IMR-90 (cell line): ENCODE measurements at regions of chr1 and their contacts with region 1.

Region 1: DNA sequence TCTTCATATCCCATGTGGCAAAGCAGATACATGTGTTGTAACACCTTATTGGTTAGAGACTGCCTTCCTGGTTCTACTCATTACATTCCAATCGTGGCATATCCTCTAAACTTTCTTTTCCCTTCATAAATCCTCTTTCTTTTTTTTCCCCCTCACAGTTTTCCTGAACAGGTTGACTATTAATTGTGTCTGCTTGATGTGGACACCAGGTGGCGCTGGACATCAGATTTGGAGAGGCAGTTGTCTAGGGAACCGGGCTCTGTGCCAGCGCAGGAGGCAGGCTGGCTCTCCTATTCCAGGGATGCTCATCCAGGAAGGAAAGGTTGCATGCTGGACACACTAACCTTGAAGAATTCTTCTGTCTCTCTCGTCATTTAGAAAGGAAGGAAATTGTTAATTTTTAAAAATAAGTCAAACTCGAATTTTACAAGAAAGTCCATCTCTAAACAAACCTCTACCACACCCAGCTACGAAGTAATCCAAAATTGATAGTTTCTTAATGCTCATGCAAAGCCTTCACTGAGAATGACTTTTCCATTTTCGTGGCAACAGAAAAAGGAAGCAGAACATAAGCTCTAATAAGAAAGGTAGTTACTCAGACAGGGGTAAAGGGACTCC is 59.4 kb upstream of the ASB17 start:
- DNase-seq: peak; percentile 83
- ATAC-seq: peak; percentile 73
- H3K4me3 ChIP-seq: no peak overlapping the region
- H3K27ac ChIP-seq: no peak overlapping the region
- H3K4me1 ChIP-seq: no peaks in the 10 kb centered on the region
- H3K27me3 ChIP-seq: peaks cover 2% of the 10 kb centered on the region; the same call in 1 of the 2 replicates
- CTCF ChIP-seq: peak; percentile 83
- POLR2A ChIP-seq: no peak
- RAD21 ChIP-seq: peak; percentile 67

Region 2: GRCh38 chr1:75870951-75871350 is 120.7 kb before region 1 on chr1:
- CTCF ChIA-PET with region 1: no interaction called
- POLR2A ChIA-PET with region 1: no interaction called
- dilution Hi-C with region 1: no loop called
- in situ Hi-C with region 1: no loop called
- intact Hi-C with region 1: no loop called
- DNase-seq: no peak
- ATAC-seq: no peak
- H3K4me3 ChIP-seq: no peak overlapping the region
- H3K27ac ChIP-seq: no peak overlapping the region
- H3K4me1 ChIP-seq: no peaks in the 10 kb centered on the region
- H3K27me3 ChIP-seq: no peaks in the 10 kb centered on the region
- CTCF ChIP-seq: no peak
- POLR2A ChIP-seq: no peak
- RAD21 ChIP-seq: no peak

Region 3: DNA sequence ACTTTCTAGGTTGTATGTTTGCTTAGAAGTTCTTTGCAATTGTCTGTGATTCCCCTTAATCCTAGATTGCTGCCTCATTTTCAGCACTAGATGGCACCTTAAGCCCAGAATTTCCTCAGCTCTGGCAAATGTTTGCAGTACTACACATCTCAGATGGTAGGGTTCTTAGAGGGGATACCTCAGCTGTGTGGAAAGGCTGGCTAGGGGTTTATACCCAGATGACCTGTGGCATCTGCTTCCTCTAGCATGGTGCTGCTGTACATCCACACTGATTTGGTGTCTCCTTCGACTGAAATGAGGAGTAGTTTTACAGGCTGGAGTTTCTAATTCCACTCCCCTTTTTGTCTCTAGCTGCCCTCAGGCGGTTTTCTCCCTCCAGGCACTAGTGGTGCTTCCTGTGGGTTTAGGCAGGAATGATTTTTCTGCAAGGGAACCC is 82.9 kb before region 1 on chr1:
- CTCF ChIA-PET with region 1: no interaction called
- POLR2A ChIA-PET with region 1: no interaction called
- dilution Hi-C with region 1: no loop called
- in situ Hi-C with region 1: no loop called
- intact Hi-C with region 1: loop called (anchors 5 kb)
- DNase-seq: peak; percentile 50
- ATAC-seq: peak; percentile 91
- H3K4me3 ChIP-seq: no peak overlapping the region
- H3K27ac ChIP-seq: no peak overlapping the region
- H3K4me1 ChIP-seq: no peaks in the 10 kb centered on the region
- H3K27me3 ChIP-seq: no peaks in the 10 kb centered on the region
- CTCF ChIP-seq: peak; percentile 64
- POLR2A ChIP-seq: no peak
- RAD21 ChIP-seq: peak; percentile 68

Region 4: DNA sequence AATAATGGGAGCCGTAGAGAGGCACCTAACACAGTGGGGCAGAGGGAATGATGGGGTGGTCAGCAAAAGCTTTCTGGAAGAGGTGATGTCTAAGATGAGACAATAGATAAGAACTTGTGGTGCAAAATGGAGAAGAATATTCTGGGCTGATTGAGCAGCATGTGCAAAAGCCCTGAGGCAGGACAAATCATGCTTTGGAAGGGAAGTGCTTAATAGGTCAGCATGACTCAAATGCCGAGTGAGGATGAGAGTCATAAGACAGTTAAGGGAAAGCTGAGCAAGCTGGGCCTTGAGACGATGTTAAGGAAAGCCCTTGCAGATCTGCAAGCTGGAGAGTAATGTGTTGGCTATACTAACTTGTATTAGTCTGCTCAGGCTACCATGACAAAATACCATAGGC is 22.1 kb before region 1 on chr1:
- CTCF ChIA-PET with region 1: no interaction called
- POLR2A ChIA-PET with region 1: no interaction called
- dilution Hi-C with region 1: no loop called
- in situ Hi-C with region 1: no loop called
- intact Hi-C with region 1: no loop called
- DNase-seq: peak; percentile 48
- ATAC-seq: no peak; the same call in 1 of the 2 replicates
- H3K4me3 ChIP-seq: no peak overlapping the region
- H3K27ac ChIP-seq: no peak overlapping the region
- H3K4me1 ChIP-seq: no peaks in the 10 kb centered on the region
- H3K27me3 ChIP-seq: no peaks in the 10 kb centered on the region
- CTCF ChIP-seq: no peak
- POLR2A ChIP-seq: no peak
- RAD21 ChIP-seq: no peak

Region 5: DNA sequence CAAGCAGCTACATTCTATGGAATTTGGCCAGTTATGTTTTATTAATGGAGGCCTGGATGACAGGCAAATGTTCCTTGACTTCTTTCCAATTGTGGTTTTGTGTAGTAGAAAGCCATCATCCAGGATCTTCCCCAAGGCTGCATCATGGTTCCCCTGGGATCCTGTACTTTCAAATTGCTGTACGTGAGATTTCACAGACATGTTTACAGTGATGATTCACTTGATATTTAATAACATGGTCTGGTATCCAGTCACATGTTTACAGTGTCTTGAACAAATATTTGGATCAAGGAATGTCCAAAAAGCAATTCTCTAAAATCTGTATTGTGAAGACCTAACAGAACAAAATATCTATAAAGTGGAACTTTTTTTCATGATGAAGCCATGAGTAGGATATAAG is 14.6 kb after region 1 on chr1:
- CTCF ChIA-PET with region 1: no interaction called
- POLR2A ChIA-PET with region 1: no interaction called
- dilution Hi-C with region 1: no loop called
- in situ Hi-C with region 1: no loop called
- intact Hi-C with region 1: no loop called
- DNase-seq: peak; percentile 83
- ATAC-seq: peak; percentile 92
- H3K4me3 ChIP-seq: no peak overlapping the region
- H3K27ac ChIP-seq: no peak overlapping the region
- H3K4me1 ChIP-seq: peaks cover 11% of the 10 kb centered on the region
- H3K27me3 ChIP-seq: no peaks in the 10 kb centered on the region
- CTCF ChIP-seq: no peak
- POLR2A ChIP-seq: no peak
- RAD21 ChIP-seq: no peak

Region 6: GRCh38 chr1:76074321-76075187 is 82.9 kb after region 1 on chr1 and contains the start of gene ST6GALNAC3:
- CTCF ChIA-PET with region 1: no interaction called
- POLR2A ChIA-PET with region 1: no interaction called
- dilution Hi-C with region 1: no loop called
- in situ Hi-C with region 1: no loop called
- intact Hi-C with region 1: loop called (anchors 5 kb)
- DNase-seq: peak; percentile 47
- ATAC-seq: peak; percentile 96
- H3K4me3 ChIP-seq: peak within 1 kb of the TSS; percentile 79
- H3K27ac ChIP-seq: peak within 1 kb of the TSS; percentile 13; the same call in 1 of the 2 replicates
- H3K4me1 ChIP-seq: no peaks in the 10 kb centered on the region
- H3K27me3 ChIP-seq: no peaks in the 10 kb centered on the region
- CTCF ChIP-seq: no peak
- POLR2A ChIP-seq: no peak
- RAD21 ChIP-seq: no peak
- total RNA-seq, gene ST6GALNAC3: 0.56 and 1.3 TPM in 2 replicates

Region 7: DNA sequence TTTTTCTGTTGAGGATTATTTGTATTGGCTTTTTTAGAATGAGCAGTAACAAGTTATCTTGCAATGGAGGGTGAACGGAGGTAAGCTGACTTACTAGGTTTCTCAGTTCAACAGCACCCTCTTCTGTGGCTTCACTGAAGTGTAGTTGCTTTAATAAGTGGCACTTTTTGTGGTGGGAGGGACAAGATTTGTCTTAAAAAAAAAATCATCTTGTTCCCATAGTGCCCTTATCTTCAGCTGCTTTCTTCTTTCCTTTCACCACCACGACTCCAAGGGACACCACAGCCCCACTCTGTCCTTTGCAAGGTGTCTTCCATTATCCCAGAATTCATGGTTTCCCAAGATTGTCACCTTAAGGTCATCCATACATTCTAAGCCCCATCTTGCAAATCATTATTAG is 1134.7 kb after region 1 on chr1:
- CTCF ChIA-PET with region 1: interaction called, 3 read pairs
- POLR2A ChIA-PET with region 1: no interaction called
- dilution Hi-C with region 1: no loop called
- in situ Hi-C with region 1: no loop called
- intact Hi-C with region 1: loop called (anchors 5 kb)
- DNase-seq: peak; percentile 80
- ATAC-seq: peak; percentile 88
- H3K4me3 ChIP-seq: no peak overlapping the region
- H3K27ac ChIP-seq: no peak overlapping the region
- H3K4me1 ChIP-seq: no peaks in the 10 kb centered on the region
- H3K27me3 ChIP-seq: no peaks in the 10 kb centered on the region
- CTCF ChIP-seq: peak; percentile 83
- POLR2A ChIP-seq: no peak
- RAD21 ChIP-seq: peak; percentile 93